Thyroid gland (tissue), 4 donors: ENCODE measurements at regions of chr19 and their contacts with region 1.

Region 1: GRCh38 chr19:10769533-10770491 is 51.9 kb downstream of the DNM2 start:
- DNase-seq: peak in 1 of 2 donors; percentile 33
- H3K4me3 ChIP-seq: no peak overlapping the region
- H3K27ac ChIP-seq: peak overlapping the region in 2 of 3 donors; percentile 51 to 65
- H3K4me1 ChIP-seq: peaks cover 23 to 52% of the 10 kb centered on the region in 2 donors
- H3K27me3 ChIP-seq: no peaks in the 10 kb centered on the region
- CTCF ChIP-seq: peak in 2 of 6 experiments; percentile 10 to 19
- POLR2A ChIP-seq: no peak

Region 2: DNA sequence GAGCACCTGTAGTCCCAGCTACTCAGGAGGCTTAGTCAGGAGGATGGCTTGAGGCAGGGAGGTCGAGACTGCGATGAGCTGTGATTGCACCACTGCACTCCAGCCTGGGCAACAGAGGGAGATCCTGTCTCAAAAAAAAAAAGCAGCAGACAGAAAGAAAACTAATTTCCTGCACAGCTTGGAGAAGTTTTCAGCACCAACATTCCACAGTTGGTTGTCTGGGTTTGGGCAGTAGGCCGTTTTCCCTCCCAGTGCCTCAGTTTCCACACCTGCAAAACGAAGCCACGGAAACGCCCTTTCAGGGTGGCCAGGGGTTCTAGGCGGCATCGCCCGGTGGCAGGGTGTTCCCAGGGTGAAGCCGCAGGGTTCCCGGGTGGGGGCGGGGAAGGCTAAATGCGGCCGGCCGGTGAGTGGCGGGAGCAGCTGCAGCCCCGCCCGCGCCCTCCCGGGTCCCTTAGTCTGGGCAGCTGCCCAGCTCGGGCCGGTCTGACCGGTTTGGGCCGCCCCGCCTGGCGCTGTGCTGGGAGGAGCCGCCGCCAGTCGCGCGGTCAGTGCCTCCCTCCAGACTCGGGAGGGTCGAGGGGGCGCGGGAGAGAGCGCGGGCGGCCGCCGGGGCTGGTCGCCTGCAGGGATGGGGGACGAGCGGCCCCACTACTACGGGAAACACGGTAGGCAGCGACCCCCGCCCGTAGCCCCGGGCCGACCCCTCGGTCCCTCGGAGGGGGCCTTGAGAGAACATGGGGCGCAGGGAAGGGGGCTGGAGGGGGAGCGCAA is 144.6 kb before region 1 on chr19 and contains the start of gene SLC44A2:
- intact Hi-C with region 1: no loop called
- DNase-seq: peak; percentile 95 to 96
- H3K4me3 ChIP-seq: peak within 1 kb of the TSS; percentile 12 to 72 (median 30)
- H3K27ac ChIP-seq: peak within 1 kb of the TSS; percentile 70 to 93 (median 92)
- H3K4me1 ChIP-seq: peaks cover 13 to 19% of the 10 kb centered on the region in 2 donors
- H3K27me3 ChIP-seq: no peaks in the 10 kb centered on the region
- CTCF ChIP-seq: no peak
- POLR2A ChIP-seq: peak in 1 of 2 donors; percentile 83
- total RNA-seq, gene SLC44A2: 86.0 to 141 (median 113) TPM

Region 3: DNA sequence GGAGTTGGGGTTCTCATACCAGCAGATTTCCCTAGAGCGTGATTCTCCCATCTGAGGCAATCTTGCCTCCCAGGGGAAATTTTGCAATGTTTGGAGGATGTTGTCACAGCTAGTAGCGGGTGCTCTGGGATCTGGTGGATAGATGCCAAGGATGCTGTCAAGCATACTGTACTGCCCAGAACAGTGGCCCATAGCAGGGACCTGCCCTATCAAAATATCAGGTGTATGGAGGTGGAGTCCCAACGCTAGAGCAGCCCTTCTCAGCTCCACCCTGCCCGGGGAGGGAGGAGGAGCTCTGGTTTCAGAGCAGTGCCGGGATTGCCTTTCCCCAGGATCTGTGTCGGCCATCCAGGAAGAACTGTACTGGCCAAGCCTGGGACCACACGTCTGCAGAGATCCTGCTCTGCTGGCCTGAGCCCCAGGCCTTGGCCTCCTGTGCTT is 79.5 kb before region 1 on chr19:
- intact Hi-C with region 1: no loop called
- DNase-seq: peak; percentile 78 to 90
- H3K4me3 ChIP-seq: no peak overlapping the region
- H3K27ac ChIP-seq: peak overlapping the region in 1 of 3 donors; percentile 40
- H3K4me1 ChIP-seq: peaks cover 3 to 4% of the 10 kb centered on the region in 2 donors
- H3K27me3 ChIP-seq: no peaks in the 10 kb centered on the region
- CTCF ChIP-seq: no peak
- POLR2A ChIP-seq: no peak

Region 4: GRCh38 chr19:10717356-10718204 is 52.2 kb before region 1 on chr19 and contains the start of gene DNM2:
- intact Hi-C with region 1: loop called (anchors 5 kb)
- DNase-seq: peak; percentile 98
- H3K4me3 ChIP-seq: peak within 1 kb of the TSS; percentile 88 to 99 (median 95)
- H3K27ac ChIP-seq: peak within 1 kb of the TSS; percentile 78 to 87 (median 79)
- H3K4me1 ChIP-seq: peaks cover 30 to 31% of the 10 kb centered on the region in 2 donors
- H3K27me3 ChIP-seq: no peaks in the 10 kb centered on the region
- CTCF ChIP-seq: peak; percentile 44 to 95 (median 88)
- POLR2A ChIP-seq: peak in 1 of 2 donors; percentile 84
- total RNA-seq, gene DNM2: 95.1 to 155 (median 120) TPM